ENCODE measurements at regions of chr11 and their contacts with region 1.

Region 1: GRCh38 chr11:118353084-118353710 is 6.2 kb upstream of the UBE4A start:
- DNase-seq: no peak
- H3K4me3 ChIP-seq: no peak overlapping the region
- H3K27ac ChIP-seq: no peak overlapping the region
- H3K4me1 ChIP-seq: no peaks in the 10 kb centered on the region
- H3K27me3 ChIP-seq: no peaks in the 10 kb centered on the region
- CTCF ChIP-seq: peak; percentile 17 to 50

Region 2: DNA sequence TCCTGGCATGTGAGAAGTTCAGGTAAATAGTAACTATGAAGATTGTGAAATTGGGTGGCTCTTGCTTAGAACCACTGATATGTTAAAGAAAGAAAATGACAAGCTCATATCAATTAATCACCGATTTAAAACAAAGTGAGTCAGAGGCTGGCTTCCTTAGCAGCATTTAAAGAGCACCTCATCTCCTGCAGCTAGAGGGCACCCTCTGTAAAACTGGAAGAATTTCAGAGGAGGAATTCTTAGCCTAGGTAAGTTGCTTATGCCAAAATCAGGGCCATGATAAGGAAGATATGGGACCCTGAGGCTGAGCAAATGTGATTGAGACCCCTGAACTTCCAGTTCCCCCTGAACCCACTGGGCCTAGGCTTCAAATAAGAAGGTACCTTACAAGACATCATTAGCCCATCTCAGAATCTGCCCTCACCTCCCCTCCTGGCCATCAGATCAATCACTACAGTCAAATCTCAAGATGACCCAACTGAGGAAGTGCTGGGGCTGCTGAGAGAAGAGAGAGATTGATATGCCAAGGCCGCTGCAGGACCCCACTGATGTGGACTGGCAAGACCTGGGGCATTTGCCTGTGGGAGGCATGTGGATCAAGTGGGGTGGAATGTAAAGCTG is 57.3 kb before region 1 on chr11:
- CTCF ChIA-PET with region 1: interaction called, 4 read pairs
- dilution Hi-C with region 1: no loop called
- in situ Hi-C with region 1: loop called (anchors 10 kb)
- intact Hi-C with region 1: loop called (anchors 1 kb)
- DNase-seq: peak; percentile 74
- H3K4me3 ChIP-seq: no peak overlapping the region
- H3K27ac ChIP-seq: no peak overlapping the region
- H3K4me1 ChIP-seq: peaks cover 14% of the 10 kb centered on the region
- H3K27me3 ChIP-seq: no peaks in the 10 kb centered on the region
- CTCF ChIP-seq: peak; percentile 77 to 87

Region 3: GRCh38 chr11:118689851-118690552 is 336.8 kb after region 1 on chr11:
- CTCF ChIA-PET with region 1: no interaction called
- dilution Hi-C with region 1: no loop called
- in situ Hi-C with region 1: no loop called
- intact Hi-C with region 1: no loop called
- DNase-seq: peak; percentile 93
- H3K4me3 ChIP-seq: peak overlapping the region in 1 of 3 experiments; percentile 19
- H3K27ac ChIP-seq: peak overlapping the region; percentile 16
- H3K4me1 ChIP-seq: peaks cover 37% of the 10 kb centered on the region
- H3K27me3 ChIP-seq: no peaks in the 10 kb centered on the region
- CTCF ChIP-seq: peak; percentile 82 to 90